Natural killer cell (primary cell): ENCODE measurements at regions of chr20 and their contacts with region 1.

Region 1: GRCh38 chr20:52379723-52380336 is 188.3 kb upstream of the ZFP64 start:
- DNase-seq: peak in 1 of 2 donors; percentile 64
- ATAC-seq: peak in 1 of 3 donors; percentile 39
- H3K4me3 ChIP-seq: no peak overlapping the region
- H3K4me3 Mint-ChIP-seq: no peak overlapping the region
- H3K27ac ChIP-seq: no peak overlapping the region
- H3K27ac Mint-ChIP-seq: no peak overlapping the region
- H3K4me1 ChIP-seq: no peaks in the 10 kb centered on the region
- H3K4me1 Mint-ChIP-seq: no peaks in the 10 kb centered on the region
- H3K27me3 ChIP-seq: no peaks in the 10 kb centered on the region
- H3K27me3 Mint-ChIP-seq: peaks cover 6 to 59% of the 10 kb centered on the region in 2 donors
- CTCF ChIP-seq: peak; percentile 95

Region 2: GRCh38 chr20:52127309-52127708 is 252.5 kb before region 1 on chr20:
- intact Hi-C with region 1: loop called (anchors 5 kb)
- DNase-seq: no peak
- ATAC-seq: no peak
- H3K4me3 ChIP-seq: no peak overlapping the region
- H3K4me3 Mint-ChIP-seq: no peak overlapping the region
- H3K27ac ChIP-seq: no peak overlapping the region
- H3K27ac Mint-ChIP-seq: no peak overlapping the region
- H3K4me1 ChIP-seq: peaks cover 4% of the 10 kb centered on the region
- H3K4me1 Mint-ChIP-seq: peaks cover 0 to 12% of the 10 kb centered on the region in 2 donors
- H3K27me3 ChIP-seq: no peaks in the 10 kb centered on the region
- H3K27me3 Mint-ChIP-seq: no peaks in the 10 kb centered on the region
- CTCF ChIP-seq: no peak

Region 3: DNA sequence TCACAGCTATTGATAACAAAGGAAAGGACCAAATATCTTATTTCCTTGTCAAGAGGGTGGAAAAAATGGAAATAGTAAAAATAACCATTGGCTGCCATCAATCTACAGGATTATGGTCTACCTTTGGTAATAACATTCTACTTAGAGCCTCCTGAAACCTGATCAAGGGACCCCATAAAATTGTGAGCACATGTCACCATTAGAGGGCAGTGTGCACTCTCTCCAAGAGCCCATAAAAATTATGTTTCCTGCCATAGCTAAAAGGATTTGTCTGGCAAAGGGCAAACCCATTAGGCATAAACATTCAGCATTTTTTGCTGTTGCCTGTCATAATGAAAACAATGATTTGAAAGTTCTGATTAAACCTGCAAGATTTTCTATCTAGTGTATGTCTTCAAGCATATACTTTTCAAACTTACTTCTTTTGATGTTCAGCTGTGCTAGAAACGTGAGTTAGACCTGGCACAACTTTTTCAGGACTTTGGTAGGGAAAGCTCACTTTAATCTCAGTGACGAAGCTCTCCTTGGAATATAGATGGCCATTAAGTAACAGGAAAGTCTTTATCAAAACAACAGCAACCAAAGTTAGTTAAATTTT is 67.6 kb before region 1 on chr20:
- intact Hi-C with region 1: loop called (anchors 10 kb)
- DNase-seq: peak in 1 of 2 donors; percentile 84
- ATAC-seq: peak in 2 of 3 donors; percentile 54 to 67
- H3K4me3 ChIP-seq: no peak overlapping the region
- H3K4me3 Mint-ChIP-seq: no peak overlapping the region
- H3K27ac ChIP-seq: no peak overlapping the region
- H3K27ac Mint-ChIP-seq: no peak overlapping the region
- H3K4me1 ChIP-seq: no peaks in the 10 kb centered on the region
- H3K4me1 Mint-ChIP-seq: no peaks in the 10 kb centered on the region
- H3K27me3 ChIP-seq: no peaks in the 10 kb centered on the region
- H3K27me3 Mint-ChIP-seq: peaks cover 22 to 28% of the 10 kb centered on the region in 2 donors
- CTCF ChIP-seq: peak; percentile 81

Region 4: DNA sequence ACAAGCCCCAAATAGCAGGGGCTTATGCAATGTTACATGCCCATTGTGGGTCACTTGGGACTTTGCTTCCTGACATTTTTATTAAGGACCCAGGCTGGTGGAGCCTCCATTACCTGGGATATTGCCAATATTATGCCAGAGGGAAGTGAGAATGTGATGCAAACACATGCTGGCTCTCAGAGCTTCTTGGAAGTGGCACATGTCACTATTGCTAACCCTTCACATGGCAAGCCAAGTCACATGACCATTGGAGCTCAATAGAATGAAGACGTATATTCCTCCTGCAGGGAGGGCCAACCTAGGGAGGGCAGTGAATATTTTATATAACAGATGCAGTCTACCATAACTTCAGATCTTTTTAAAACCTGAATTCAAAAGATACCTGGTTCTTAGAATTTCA is 47.6 kb before region 1 on chr20:
- intact Hi-C with region 1: no loop called
- DNase-seq: no peak
- ATAC-seq: no peak
- H3K4me3 ChIP-seq: no peak overlapping the region
- H3K4me3 Mint-ChIP-seq: no peak overlapping the region
- H3K27ac ChIP-seq: no peak overlapping the region
- H3K27ac Mint-ChIP-seq: no peak overlapping the region
- H3K4me1 ChIP-seq: no peaks in the 10 kb centered on the region
- H3K4me1 Mint-ChIP-seq: no peaks in the 10 kb centered on the region
- H3K27me3 ChIP-seq: no peaks in the 10 kb centered on the region
- H3K27me3 Mint-ChIP-seq: peaks cover 22 to 26% of the 10 kb centered on the region in 2 donors
- CTCF ChIP-seq: no peak